Activated CD4-positive, alpha-beta T cell treated with anti-CD3 and anti-CD28 coated beads for 36 hours (primary cell): ENCODE measurements at regions of chr7 and their contacts with region 1.

Region 1: GRCh38 chr7:119270045-119270464 is 1002.9 kb upstream of the KCND2 start:
- DNase-seq: peak; percentile 57
- ATAC-seq: peak; percentile 68
- H3K4me3 Mint-ChIP-seq: no peak overlapping the region
- H3K27ac Mint-ChIP-seq: no peak overlapping the region
- H3K4me1 Mint-ChIP-seq: no peaks in the 10 kb centered on the region
- H3K27me3 Mint-ChIP-seq: no peaks in the 10 kb centered on the region

Region 2: DNA sequence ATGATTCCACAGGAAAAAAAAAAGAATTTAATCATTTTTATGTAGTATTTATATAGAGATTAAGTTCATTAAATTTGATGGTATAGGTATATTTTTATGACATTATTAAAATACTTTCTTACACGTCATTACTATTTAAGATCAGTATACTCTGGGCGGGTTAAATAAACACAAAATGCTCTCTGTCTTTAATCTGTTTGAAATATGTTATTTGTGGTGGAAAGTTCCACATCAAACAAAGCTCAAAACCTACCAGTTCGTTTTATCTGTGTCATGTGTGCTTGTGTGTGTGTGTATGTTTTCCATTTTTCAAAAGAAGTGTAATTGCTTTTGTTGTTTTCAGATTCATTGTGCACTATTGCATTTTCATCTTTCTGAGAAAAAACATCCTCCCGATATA is 557.0 kb before region 1 on chr7:
- CTCF ChIA-PET with region 1: no interaction called
- POLR2A ChIA-PET with region 1: no interaction called
- intact Hi-C with region 1: no loop called
- DNase-seq: no peak
- ATAC-seq: no peak
- H3K4me3 Mint-ChIP-seq: no peak overlapping the region
- H3K27ac Mint-ChIP-seq: no peak overlapping the region
- H3K4me1 Mint-ChIP-seq: no peaks in the 10 kb centered on the region
- H3K27me3 Mint-ChIP-seq: no peaks in the 10 kb centered on the region

Region 3: DNA sequence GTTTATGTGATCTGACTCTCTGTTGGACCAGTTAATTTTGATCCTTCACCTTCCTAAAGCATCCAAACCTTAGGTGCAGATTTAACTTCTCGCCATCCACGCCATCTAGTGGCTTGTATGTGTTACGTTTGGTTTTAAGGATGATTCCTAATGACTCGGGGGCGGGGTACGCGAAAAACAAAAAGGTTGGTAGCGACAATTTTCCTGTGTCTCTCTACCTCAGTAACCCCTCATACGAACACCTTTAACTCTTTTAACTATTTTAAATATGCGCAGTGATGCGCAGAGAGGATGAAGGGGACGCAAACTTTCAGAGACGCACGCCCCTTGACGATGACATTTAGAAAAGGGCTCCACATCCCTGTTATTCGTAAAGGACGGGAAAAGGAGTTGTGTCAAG is 1002.2 kb after region 1 on chr7:
- CTCF ChIA-PET with region 1: no interaction called
- POLR2A ChIA-PET with region 1: no interaction called
- intact Hi-C with region 1: loop called in 1 of 2 experiments (anchors 2 kb)
- DNase-seq: peak; percentile 22
- ATAC-seq: no peak
- H3K4me3 Mint-ChIP-seq: no peak overlapping the region
- H3K27ac Mint-ChIP-seq: no peak overlapping the region
- H3K4me1 Mint-ChIP-seq: peaks cover 7% of the 10 kb centered on the region
- H3K27me3 Mint-ChIP-seq: peaks cover 30% of the 10 kb centered on the region

Region 4: GRCh38 chr7:120554960-120555571 is 1285.0 kb after region 1 on chr7:
- CTCF ChIA-PET with region 1: no interaction called
- POLR2A ChIA-PET with region 1: no interaction called
- intact Hi-C with region 1: loop called in 1 of 2 experiments (anchors 1 kb)
- DNase-seq: peak; percentile 40
- ATAC-seq: peak; percentile 39
- H3K4me3 Mint-ChIP-seq: no peak overlapping the region
- H3K27ac Mint-ChIP-seq: no peak overlapping the region
- H3K4me1 Mint-ChIP-seq: no peaks in the 10 kb centered on the region
- H3K27me3 Mint-ChIP-seq: no peaks in the 10 kb centered on the region

Region 5: GRCh38 chr7:120725376-120726039 is 1455.5 kb after region 1 on chr7:
- CTCF ChIA-PET with region 1: no interaction called
- POLR2A ChIA-PET with region 1: no interaction called
- intact Hi-C with region 1: loop called (anchors 2 to 10 kb)
- DNase-seq: no peak
- ATAC-seq: no peak
- H3K4me3 Mint-ChIP-seq: no peak overlapping the region
- H3K27ac Mint-ChIP-seq: no peak overlapping the region
- H3K4me1 Mint-ChIP-seq: no peaks in the 10 kb centered on the region
- H3K27me3 Mint-ChIP-seq: peaks cover 11% of the 10 kb centered on the region